ENCODE measurements at regions of chr6 and their contacts with region 1.

Region 1: GRCh38 chr6:41936073-41936837 is 5.4 kb downstream of the CCND3 start:
- DNase-seq: peak in 1 of 2 experiments; percentile 78
- H3K4me3 ChIP-seq: no peak overlapping the region
- H3K27ac ChIP-seq: no peak overlapping the region
- H3K4me1 ChIP-seq: peaks cover 6 to 25% (median 21%) of the 10 kb centered on the region in 4 experiments
- H3K27me3 ChIP-seq: no peaks in the 10 kb centered on the region
- CTCF ChIP-seq: peak in 2 of 3 experiments; percentile 83 to 94; a peak in 3 of 4 replicates
- EP300 ChIP-seq: no peak
- POLR2A ChIP-seq: no peak; a peak in 1 of 3 replicates
- RAD21 ChIP-seq: peak; percentile 67 to 79

Region 2: GRCh38 chr6:41966961-41967311 is 30.7 kb after region 1 on chr6:
- CTCF ChIA-PET with region 1: interaction called, 14 read pairs
- POLR2A ChIA-PET with region 1: interaction called, 12 read pairs
- DNase-seq: no peak
- H3K4me3 ChIP-seq: no peak overlapping the region; a peak in 1 of 8 replicates
- H3K27ac ChIP-seq: no peak overlapping the region
- H3K4me1 ChIP-seq: peaks cover 15 to 28% (median 23%) of the 10 kb centered on the region in 4 experiments
- H3K27me3 ChIP-seq: no peaks in the 10 kb centered on the region; a peak in 1 of 7 replicates
- CTCF ChIP-seq: no peak
- EP300 ChIP-seq: no peak
- POLR2A ChIP-seq: no peak
- RAD21 ChIP-seq: no peak

Region 3: GRCh38 chr6:42009966-42010891 is 74.0 kb after region 1 on chr6:
- CTCF ChIA-PET with region 1: interaction called, 13 read pairs
- POLR2A ChIA-PET with region 1: interaction called, 10 read pairs
- DNase-seq: no peak
- H3K4me3 ChIP-seq: no peak overlapping the region; a peak in 1 of 8 replicates
- H3K27ac ChIP-seq: no peak overlapping the region
- H3K4me1 ChIP-seq: peaks cover 0 to 6% (median 3%) of the 10 kb centered on the region in 4 experiments; a peak in 5 of 7 replicates
- H3K27me3 ChIP-seq: no peaks in the 10 kb centered on the region
- CTCF ChIP-seq: no peak
- EP300 ChIP-seq: no peak
- POLR2A ChIP-seq: no peak
- RAD21 ChIP-seq: no peak